ENCODE measurements at regions of chr15 and their contacts with region 1.

Region 1: GRCh38 chr15:38453971-38454695 is at the start of gene FAM98B:
- DNase-seq: peak; percentile 88
- H3K4me3 ChIP-seq: peak within 1 kb of the TSS; percentile 86
- H3K27ac ChIP-seq: peak within 1 kb of the TSS; percentile 72
- H3K4me1 ChIP-seq: peaks cover 15% of the 10 kb centered on the region
- CTCF ChIP-seq: peak; percentile 56
- total RNA-seq, gene FAM98B: 8.5 and 17.0 TPM in 2 replicates

Region 2: DNA sequence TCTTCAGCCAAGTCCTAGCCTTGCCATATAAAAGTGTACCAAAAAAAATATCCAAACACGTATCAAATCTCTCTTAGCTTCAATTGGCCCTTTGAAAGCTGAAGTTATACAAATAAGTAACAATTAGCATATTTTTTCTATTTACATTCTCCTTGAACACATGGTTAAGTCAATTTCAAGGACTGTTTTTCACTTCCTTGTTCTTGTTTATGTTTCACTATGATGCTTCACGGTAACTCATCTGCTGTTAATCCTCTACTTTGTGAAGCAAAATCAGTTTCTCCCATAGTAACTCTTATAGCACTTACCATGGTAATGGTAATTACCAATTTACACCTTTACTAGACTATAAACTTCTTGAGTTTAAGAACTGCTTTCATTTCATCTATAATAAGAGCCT is 212.1 kb before region 1 on chr15:
- CTCF ChIA-PET with region 1: no interaction called
- POLR2A ChIA-PET with region 1: interaction called, 11 read pairs
- intact Hi-C with region 1: no loop called
- DNase-seq: peak; percentile 55
- H3K4me3 ChIP-seq: peak overlapping the region; percentile 47
- H3K27ac ChIP-seq: peak overlapping the region; percentile 9
- H3K4me1 ChIP-seq: peaks cover 46% of the 10 kb centered on the region
- CTCF ChIP-seq: no peak

Region 3: DNA sequence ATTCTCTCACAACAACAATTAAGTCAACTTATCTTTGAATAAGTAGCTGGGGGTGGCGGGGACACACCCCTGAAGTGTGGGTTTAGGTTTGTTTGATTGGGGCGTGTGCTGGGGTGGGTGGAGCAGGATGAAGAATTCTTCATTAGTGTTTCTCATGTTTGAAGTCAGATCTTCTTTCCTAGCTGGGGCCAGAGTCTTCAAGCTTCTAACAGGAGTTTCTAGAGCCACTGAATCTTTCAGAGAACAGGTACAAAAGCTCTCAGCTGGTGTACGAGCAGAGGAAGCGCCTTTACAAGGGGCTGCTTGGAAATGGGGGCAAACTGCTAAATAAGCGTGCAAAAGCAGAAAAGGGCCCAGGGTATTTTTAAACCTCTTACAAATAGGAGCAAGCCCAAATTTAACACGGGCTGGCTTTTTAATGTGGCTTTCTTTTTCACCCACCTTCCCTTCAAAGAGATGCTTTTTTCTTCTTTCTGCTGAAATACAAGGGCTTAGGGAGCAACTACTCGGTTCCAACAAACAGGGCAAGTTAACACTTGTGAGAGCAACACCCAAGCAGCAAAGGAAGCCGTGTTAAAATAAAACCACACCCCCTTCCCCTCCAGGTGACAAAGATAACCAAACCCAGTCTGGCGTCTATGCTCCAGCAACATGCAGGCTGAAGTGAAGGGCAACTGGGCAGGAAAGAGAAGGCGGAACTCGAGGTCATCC is 197.3 kb after region 1 on chr15:
- CTCF ChIA-PET with region 1: no interaction called
- POLR2A ChIA-PET with region 1: interaction called, 4 read pairs
- intact Hi-C with region 1: loop called (anchors 1 kb)
- DNase-seq: peak; percentile 88
- H3K4me3 ChIP-seq: peak overlapping the region; percentile 53
- H3K27ac ChIP-seq: peak overlapping the region; percentile 93
- H3K4me1 ChIP-seq: peaks cover 40% of the 10 kb centered on the region
- CTCF ChIP-seq: no peak

Measured in OCI-LY7 (cell line).